GM13976 (cell line): ENCODE measurements at regions of chr20 and their contacts with region 1.

Region 1: GRCh38 chr20:21719592-21720214 is 14.2 kb downstream of the PAX1 start:
- DNase-seq: peak; percentile 57
- CTCF ChIP-seq: peak; percentile 67

Region 2: DNA sequence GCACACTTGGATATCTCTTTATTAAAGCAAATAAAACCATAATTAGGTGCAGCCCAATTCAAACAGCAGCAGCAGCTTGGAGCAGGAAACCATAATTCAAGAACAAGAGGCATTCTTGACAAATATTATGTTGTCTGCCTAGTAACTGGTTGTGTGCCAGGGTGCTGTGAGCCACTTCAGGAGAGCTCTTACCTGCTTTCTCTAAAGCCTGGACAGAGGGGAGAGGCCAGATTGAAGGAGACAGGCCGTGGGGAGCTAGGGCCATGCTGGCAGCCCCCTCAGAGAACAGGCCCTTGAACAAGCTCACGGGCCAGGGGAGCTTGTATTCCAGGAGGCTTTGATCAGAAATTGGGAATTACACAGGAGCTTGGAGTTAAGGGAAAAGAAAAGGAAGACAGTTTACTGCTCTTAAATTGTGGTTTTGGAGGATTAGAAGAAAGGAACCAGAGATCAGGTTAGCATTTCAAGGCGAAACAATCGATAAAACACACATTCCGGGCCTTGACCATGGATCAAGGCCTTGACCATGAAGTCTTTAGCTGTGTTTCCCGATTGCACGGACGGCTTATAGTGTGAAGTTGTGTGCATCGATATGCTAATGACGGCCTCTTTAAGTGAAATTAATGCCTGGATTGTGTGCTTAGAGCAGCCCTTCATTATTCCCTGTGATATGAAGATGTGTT is 136.1 kb before region 1 on chr20:
- in situ Hi-C with region 1: no loop called
- DNase-seq: no peak
- CTCF ChIP-seq: no peak

Region 3: DNA sequence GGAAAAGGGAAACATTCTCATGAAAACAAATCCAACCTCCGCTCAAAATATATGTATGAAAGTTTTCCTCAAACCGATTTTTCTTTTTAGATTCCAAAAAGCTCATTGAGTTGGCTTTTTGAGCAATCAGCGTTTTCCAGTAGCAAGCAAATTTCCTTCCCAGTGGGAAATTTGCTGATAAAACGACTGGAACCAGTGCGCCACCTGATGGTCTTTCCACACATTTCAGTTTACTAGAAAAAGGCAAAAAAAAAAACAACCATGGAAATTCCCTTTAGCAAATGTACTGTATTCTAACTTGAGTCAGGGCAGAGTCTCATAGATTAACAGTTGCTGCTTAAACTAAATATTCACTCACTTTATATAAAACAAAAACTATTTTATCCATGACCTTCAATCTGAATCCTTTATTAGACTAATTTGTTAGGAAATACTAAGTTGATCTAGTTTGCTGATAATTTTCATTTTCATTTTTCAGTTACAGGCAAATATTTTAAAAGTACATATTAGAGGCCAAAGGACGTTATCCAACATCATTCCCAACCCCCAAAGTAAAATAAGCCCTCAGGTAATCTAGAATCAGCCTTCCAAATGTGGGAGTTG is 593.1 kb after region 1 on chr20:
- in situ Hi-C with region 1: loop called (anchors 25 kb)
- DNase-seq: peak; percentile 18
- CTCF ChIP-seq: peak; percentile 25

Region 4: DNA sequence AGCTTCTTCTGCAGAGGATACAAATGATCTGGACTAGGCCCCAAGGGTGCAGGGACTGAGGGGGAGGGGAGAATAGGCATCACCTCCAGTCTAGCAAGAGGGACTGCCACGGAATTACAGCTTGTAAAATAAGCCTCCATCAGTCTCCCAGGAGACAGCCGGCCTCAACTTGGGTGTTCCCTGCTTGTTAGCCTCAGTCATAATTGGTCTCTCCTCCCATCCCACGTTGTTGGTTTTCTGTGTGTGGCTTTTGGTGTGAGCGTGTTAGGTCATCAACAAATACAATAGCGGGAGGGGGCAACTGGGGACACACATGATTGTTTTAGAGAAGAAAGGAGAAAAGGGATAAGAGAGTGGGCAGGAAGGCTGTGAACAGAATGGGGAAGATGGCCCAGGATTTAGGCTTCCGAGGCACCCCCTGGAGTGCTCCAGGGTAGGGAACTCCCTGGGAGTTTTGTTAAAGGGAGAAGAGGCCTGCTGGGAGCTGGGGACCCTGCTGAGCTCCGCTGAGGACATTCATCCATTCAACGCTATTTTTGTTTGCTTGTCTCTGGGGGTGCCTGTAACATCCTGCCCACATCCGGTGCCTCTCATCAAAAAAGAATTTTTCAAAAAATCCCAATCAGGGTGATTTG is 855.5 kb after region 1 on chr20:
- in situ Hi-C with region 1: loop called (anchors 10 kb)
- DNase-seq: no peak
- CTCF ChIP-seq: no peak